OCI-LY7 (cell line): ENCODE measurements at regions of chr20 and their contacts with region 1.

Region 1: GRCh38 chr20:57654363-57654997 is 34.3 kb upstream of the ZBP1 start:
- DNase-seq: peak; percentile 78
- H3K4me3 ChIP-seq: no peak overlapping the region
- H3K27ac ChIP-seq: no peak overlapping the region
- H3K4me1 ChIP-seq: peaks cover 14% of the 10 kb centered on the region
- CTCF ChIP-seq: peak; percentile 96

Region 2: GRCh38 chr20:57596998-57597939 is 57.2 kb before region 1 on chr20:
- CTCF ChIA-PET with region 1: no interaction called
- POLR2A ChIA-PET with region 1: interaction called, 5 read pairs
- intact Hi-C with region 1: loop called (anchors 1 kb)
- DNase-seq: peak; percentile 75
- H3K4me3 ChIP-seq: no peak overlapping the region
- H3K27ac ChIP-seq: no peak overlapping the region
- H3K4me1 ChIP-seq: peaks cover 13% of the 10 kb centered on the region
- CTCF ChIP-seq: peak; percentile 91

Region 3: DNA sequence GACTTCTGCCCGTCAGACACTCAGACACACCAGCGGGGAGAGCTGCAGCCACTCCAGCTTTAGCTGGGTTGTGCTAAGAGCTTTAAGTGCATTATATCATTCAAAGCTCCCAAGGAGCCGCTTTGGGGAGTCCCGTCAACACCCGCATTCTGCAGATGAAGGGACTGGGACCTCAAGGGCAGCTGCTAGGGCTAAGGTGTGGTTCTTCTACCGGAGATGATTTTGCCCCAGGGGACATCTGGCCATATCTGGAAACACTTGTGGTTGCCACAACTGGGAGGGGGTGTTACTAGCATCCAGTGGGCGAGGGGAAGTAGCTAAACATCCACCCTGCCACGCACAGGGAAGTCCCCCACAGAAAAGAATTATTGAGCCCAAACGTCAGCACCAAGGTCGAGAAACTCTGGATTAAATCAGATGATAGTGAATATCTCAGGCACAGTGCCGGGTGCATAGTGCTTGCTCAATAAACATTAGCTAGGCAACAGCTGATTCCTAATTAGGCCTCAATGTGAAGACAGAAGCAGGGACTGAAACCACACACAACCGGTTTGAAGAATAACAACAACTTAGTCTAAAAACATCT is 25.7 kb after region 1 on chr20:
- CTCF ChIA-PET with region 1: interaction called, 5 read pairs
- POLR2A ChIA-PET with region 1: interaction called, 8 read pairs
- intact Hi-C with region 1: loop called (anchors 1 kb)
- DNase-seq: peak; percentile 91
- H3K4me3 ChIP-seq: peak overlapping the region; percentile 64
- H3K27ac ChIP-seq: peak overlapping the region; percentile 99
- H3K4me1 ChIP-seq: peaks cover 92% of the 10 kb centered on the region
- CTCF ChIP-seq: no peak

Region 4: DNA sequence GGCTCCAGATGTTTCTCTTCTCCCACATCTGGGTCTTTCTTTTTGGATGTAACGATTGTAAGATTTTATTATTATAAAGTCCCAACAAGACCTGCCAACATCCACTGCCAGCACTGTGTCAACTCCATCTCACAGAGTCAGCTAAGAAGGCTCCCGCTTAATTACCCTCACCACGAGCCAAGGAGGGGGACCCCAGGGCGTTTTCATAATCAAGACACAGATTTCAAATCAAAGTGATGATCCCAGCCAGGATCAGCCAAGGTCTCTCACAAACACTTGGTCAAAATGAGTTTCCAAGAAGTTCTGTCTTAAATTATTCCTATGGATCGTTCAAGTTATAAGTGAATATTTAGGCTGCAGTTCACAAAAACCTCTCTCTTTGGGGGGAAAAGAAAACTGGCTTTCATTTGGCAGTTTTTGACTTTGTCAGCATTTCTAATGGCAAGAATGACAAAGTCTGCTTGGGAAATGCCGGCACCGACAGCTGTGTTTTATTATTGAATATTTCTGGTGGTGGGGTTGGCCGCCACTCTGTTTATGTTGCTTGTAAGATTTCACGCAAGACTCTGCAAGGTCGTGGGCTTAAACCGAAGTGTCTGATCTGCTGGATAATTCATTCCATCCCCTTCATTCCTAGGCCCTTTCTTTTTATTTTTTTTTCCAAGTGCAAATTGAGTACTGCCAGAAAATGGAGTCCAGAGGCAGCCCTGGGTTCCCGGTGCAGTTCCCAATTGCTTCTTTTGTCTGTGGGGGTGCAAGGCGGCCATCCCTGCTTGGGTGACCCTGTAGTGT is 225.5 kb after region 1 on chr20:
- CTCF ChIA-PET with region 1: no interaction called
- POLR2A ChIA-PET with region 1: no interaction called
- intact Hi-C with region 1: loop called (anchors 5 kb)
- DNase-seq: no peak
- H3K4me3 ChIP-seq: no peak overlapping the region
- H3K27ac ChIP-seq: no peak overlapping the region
- H3K4me1 ChIP-seq: no peaks in the 10 kb centered on the region
- CTCF ChIP-seq: no peak

Region 5: DNA sequence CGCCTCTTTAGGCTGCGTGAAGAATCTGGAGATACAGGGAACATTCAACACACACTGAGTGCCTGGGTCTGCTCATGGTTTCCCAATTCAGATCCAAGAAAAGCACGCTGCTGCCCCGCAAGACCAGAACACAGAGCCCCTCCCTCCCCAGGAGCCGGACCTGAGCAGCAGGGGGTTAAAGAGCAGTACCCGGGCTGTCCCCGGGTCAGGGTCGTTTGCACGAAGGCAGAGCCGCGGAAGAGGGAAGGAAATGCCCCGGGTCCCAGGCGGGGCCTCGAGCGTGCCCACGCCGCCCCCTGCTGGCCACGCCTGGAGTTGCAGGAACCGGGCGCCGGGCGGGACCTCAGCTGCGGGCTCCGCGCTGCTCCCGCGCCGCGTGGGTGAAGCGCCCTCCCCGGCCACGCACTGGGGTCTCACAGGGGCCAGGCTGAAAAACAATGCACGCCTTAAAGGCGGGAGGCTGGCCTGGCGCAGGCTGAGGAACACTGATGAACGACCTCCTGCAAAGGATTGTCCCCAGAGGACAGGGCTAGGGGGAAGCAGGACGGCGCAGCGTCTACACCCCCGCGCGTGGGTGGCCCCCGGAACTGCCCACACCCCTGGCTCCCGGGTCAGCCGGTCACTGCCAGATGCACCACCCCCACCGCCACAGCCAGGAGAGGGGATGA is 525.1 kb after region 1 on chr20:
- CTCF ChIA-PET with region 1: no interaction called
- POLR2A ChIA-PET with region 1: no interaction called
- intact Hi-C with region 1: loop called (anchors 5 kb)
- DNase-seq: peak; percentile 67
- H3K4me3 ChIP-seq: peak overlapping the region; percentile 32
- H3K27ac ChIP-seq: no peak overlapping the region
- H3K4me1 ChIP-seq: peaks cover 4% of the 10 kb centered on the region
- CTCF ChIP-seq: peak; percentile 91